ENCODE measurements at regions of chr14 and their contacts with region 1.

Region 1: DNA sequence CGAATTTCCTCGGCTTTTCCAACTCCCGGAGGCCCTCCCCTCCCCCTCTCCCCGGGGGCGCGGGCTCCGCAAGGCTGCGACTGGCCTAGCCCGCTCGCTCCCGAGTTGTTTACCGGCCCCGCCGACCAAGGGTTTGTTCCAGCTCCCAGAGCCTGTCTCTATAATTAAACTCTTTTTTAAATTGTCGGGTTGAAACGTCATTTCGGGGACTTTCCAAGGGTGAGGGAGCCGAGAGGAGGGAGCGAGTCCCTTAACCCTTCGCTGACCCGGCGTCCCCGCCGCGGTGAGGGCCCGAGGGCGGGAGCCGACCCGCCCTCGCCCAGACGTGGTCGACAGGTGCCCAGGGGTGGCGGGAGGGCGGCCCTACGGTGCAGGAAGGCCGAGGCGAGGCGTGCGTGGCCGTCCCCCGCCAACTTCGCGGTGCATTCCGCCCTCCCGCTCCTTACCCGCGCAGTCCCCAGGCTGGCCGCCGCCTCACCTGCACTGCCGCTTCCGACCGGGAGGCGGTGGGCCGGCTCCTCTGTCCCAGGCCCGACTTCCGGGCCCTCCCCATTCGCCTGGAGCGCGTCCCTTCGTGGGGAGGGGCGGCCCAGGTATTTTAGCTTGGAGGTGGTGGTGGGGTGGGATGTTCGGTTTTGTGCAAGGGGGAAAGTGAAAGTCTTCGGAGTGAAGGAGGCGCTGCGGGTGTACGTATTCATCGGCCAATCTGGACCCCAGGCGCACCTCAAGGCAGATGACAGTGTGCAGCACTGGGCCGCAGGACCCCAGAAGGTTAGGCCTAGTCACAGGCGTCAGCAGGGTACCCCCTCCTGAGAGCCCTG is 2.9 kb upstream of the ZFP36L1 start:
- DNase-seq: peak; percentile 87 to 92 (median 90)
- ATAC-seq: peak; percentile 24 to 72 (median 48)
- H3K4me3 ChIP-seq: peak overlapping the region; percentile 60 to 94 (median 84)
- H3K27ac ChIP-seq: peak overlapping the region; percentile 98 to 100 (median 99)
- H3K4me1 ChIP-seq: peaks cover 0 to 17% (median 9%) of the 10 kb centered on the region in 12 donors
- H3K27me3 ChIP-seq: no peaks in the 10 kb centered on the region
- CTCF ChIP-seq: peak; percentile 47 to 88 (median 76)
- POLR2A ChIP-seq: peak in 1 of 2 donors; percentile 88

Region 2: GRCh38 chr14:68386950-68387779 is 408.6 kb before region 1 on chr14:
- intact Hi-C with region 1: loop called in 3 of 10 experiments (anchors 5 to 10 kb)
- DNase-seq: no peak
- ATAC-seq: no peak
- H3K4me3 ChIP-seq: no peak overlapping the region
- H3K27ac ChIP-seq: peak overlapping the region in 2 of 12 donors; percentile 34 to 48
- H3K4me1 ChIP-seq: peaks cover 0 to 73% (median 22%) of the 10 kb centered on the region in 12 donors
- H3K27me3 ChIP-seq: no peaks in the 10 kb centered on the region
- CTCF ChIP-seq: no peak
- POLR2A ChIP-seq: no peak

Region 3: DNA sequence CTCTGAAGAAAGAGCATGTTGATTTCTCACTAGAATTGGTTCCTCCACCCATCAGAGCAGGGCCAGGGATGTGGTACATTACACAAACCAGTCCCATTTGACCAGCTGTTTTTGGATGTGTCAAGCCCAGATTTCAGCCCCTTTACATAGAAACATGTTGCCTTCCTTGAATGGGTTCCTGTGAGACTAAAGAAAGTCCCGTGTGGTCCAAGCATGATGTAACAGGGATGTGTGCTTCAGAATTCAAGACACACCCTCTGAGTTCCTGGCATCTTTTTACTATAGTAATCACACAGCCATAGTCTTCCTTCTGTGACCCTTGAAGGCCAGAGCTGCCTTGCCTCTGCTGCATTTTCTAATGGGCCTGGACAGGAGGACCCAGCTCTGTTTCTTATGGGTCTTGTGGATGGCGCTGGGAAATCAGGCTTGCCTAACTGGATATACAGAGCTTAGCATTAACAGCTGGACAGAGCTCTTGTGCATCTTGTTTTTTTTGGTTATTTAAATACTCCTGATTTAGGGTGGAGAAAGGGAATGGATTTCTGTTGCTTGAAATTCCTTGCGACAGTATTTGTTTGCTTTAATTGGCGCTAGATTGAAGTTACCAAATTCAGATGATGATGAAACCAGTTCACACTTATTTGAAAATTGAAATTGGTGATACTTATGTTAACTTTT is 344.0 kb before region 1 on chr14:
- intact Hi-C with region 1: loop called in 2 of 10 experiments (anchors 5 to 10 kb)
- DNase-seq: peak in 3 of 5 donors; percentile 32 to 61 (median 38)
- ATAC-seq: peak; percentile 76 to 95 (median 91)
- H3K4me3 ChIP-seq: no peak overlapping the region
- H3K27ac ChIP-seq: peak overlapping the region in 11 of 12 donors; percentile 13 to 71 (median 59)
- H3K4me1 ChIP-seq: peaks cover 0 to 31% (median 4%) of the 10 kb centered on the region in 12 donors
- H3K27me3 ChIP-seq: no peaks in the 10 kb centered on the region
- CTCF ChIP-seq: no peak
- POLR2A ChIP-seq: no peak

Region 4: DNA sequence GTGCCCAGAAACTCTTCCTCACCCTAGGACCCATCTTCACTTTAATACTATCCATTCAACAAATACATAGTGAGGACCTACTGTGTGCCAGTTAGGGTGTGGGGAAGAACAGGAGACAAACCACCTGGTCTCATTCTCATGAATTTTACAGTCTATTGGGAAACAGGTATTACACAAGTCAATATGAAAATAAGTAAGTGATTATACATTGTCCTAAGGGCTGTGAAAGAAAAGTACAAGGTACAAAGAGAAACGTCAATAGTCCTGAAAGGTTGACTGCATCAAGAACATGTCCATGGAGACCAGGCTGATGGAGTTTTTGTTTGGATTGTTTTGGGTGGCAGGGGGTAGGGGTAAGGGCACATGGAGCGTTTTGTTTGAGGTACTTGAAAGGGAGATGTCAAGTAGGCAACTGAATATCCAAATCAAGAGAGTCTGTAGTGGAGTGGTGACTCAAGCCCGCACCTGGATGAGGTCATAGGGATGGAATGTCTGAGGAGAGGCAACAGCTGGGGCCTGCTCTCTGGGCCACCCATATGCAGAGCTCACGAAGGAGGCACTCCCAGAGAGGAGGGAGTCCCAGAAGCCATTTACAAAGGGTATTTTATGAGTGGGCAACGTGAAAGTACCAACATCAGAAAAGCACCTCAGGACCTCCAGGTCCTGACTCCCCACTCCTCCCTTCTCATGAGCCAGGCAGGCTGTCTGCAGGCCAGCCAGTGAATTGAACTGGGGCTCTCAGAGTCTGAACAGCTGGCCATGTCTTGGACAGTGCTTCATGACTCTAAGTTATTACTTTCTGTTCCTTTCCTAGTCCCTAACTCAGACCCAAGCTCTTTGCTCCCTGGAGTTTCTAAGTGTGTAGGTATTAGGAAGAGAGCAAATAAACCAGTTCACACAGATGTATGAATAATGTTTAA is 274.9 kb before region 1 on chr14:
- intact Hi-C with region 1: loop called in 4 of 10 experiments (anchors 5 to 10 kb)
- DNase-seq: no peak
- ATAC-seq: peak in 1 of 4 donors; percentile 30
- H3K4me3 ChIP-seq: no peak overlapping the region
- H3K27ac ChIP-seq: peak overlapping the region in 7 of 12 donors; percentile 51 to 74 (median 60)
- H3K4me1 ChIP-seq: peaks cover 0 to 74% (median 49%) of the 10 kb centered on the region in 12 donors
- H3K27me3 ChIP-seq: no peaks in the 10 kb centered on the region
- CTCF ChIP-seq: no peak
- POLR2A ChIP-seq: no peak

Region 5: GRCh38 chr14:68685419-68686204 is 110.2 kb before region 1 on chr14:
- intact Hi-C with region 1: loop called in 2 of 10 experiments (anchors 2 to 5 kb)
- DNase-seq: peak in 1 of 5 donors; percentile 19
- ATAC-seq: no peak
- H3K4me3 ChIP-seq: no peak overlapping the region
- H3K27ac ChIP-seq: peak overlapping the region in 3 of 12 donors; percentile 34 to 95 (median 84)
- H3K4me1 ChIP-seq: peaks cover 6 to 65% (median 41%) of the 10 kb centered on the region in 12 donors
- H3K27me3 ChIP-seq: no peaks in the 10 kb centered on the region
- CTCF ChIP-seq: no peak
- POLR2A ChIP-seq: no peak

Measured in heart left ventricle (tissue), 16 donors.